G401 (cell line): ENCODE measurements at regions of chr10 and their contacts with region 1.

Region 1: DNA sequence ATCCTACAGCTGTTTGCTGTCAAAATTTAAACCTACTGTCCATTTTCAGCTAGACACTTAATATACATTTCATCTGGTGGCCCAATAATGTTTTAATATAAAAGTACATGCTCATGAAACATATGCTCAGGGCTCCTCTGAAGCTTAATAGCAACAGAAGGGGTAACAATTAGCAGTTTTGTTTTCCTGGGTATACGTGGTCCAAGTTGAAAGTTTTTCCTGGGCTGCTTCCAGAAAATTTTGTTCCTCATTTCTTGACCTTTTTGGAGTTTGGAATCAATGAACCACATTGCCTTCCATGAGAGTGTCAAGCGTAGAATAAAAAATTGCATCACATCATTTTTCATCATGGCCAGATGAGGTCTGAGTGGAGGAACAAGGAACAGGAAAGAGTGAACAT is 537.3 kb upstream of the MGMT start:
- DNase-seq: no peak

Region 2: DNA sequence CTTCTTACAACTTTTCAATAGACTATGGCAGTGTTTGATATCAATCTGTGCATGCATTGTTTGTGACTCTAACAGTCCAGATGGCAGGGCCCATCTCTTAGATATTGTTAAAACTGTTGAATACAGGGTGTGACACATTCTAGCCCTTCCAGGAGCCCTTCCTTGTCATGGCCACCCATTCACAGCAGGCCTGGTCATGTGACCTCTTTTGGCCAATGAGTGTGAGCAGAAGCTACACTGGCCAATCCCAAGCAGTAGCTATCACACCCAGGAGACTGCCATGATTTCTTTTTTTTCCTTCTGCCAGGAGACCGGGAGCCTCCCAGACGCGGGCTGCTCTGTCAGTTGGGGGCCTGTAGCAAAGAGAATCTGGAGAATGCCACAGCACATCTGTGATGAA is 148.1 kb before region 1 on chr10:
- in situ Hi-C with region 1: no loop called
- DNase-seq: no peak

Region 3: DNA sequence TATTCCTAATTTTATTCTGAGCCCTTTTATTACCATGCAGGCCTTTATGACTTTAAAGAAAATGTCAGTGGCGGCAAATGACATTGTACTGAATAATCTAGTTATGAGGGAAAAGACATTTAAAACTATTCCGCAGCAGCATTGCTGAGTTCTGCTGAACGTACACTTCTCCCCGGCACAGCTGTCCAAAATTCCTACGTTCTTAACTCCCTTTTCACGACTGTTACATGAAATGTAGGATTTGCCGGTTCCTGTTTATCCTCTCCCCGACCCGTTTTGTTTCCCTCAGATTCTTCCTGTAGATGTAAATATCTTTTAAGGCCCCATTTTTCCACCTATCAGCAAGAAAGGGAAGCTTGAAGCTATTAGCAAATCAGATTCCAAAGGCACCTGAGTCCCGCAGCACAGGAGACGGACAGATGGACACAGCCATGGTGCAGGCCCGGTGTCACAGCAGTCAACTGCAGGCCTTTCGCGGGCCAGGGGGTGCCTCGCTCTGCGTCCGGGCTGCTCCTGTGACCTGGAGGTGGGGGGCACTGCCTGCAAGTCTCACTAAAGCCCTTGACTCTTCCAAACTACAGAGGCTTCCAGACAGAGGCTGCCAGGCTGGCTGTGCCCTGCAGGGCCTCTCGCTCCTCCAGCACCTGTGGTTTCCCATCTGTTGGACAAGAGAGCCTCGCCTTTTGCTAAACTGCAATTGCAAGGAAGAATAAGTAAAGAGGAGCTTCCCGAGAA is 52.3 kb after region 1 on chr10:
- in situ Hi-C with region 1: loop called (anchors 5 kb)
- DNase-seq: peak; percentile 70

Region 4: DNA sequence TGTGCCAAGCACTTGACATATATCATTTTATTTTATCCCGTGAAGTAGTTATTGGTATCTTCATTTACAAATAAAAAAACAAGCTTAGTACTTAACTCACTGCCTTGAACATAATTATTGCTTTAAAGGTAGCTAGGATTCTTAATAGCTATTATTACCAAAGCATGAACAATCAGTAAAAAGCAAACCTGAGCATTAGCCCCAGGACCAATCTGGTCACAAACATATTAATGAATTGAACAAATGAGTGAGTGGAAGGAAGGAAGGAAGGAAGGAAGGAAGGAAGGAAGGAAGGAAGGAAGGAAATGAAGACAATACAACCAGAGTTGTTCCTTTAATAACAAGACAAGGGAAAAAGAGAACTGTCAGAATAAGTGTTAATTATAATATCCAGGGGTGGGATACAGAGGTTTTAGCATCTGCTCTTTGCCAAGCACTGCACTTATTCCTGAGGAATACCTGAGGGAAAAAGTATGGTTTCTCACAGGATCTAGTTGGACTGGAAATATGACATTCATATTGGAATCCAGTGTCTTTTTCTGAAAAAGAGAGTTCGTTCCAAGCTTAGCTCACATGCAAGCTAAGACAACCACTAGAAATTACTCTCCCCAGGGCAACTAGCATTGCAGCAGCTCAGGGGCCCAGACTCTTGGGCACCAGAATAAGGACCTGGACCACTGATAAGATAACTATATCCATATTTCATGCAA is 364.4 kb after region 1 on chr10:
- in situ Hi-C with region 1: no loop called
- DNase-seq: no peak